Gastrocnemius medialis (tissue), 4 donors: ENCODE measurements at regions of chr5 and their contacts with region 1.

Region 1: GRCh38 chr5:36606428-36607113 is at the start of gene SLC1A3:
- DNase-seq: peak; percentile 64 to 72
- ATAC-seq: peak; percentile 94 to 95
- H3K4me3 ChIP-seq: peak within 1 kb of the TSS; percentile 59 to 83 (median 76)
- H3K27ac ChIP-seq: peak within 1 kb of the TSS; percentile 75 to 94 (median 91)
- H3K4me1 ChIP-seq: peaks cover 21 to 34% of the 10 kb centered on the region in 2 donors
- H3K27me3 ChIP-seq: no peaks in the 10 kb centered on the region
- CTCF ChIP-seq: no peak
- POLR2A ChIP-seq: peak; percentile 77 to 92
- total RNA-seq, gene SLC1A3: 5.3 to 69.4 (median 17.4) TPM

Region 2: DNA sequence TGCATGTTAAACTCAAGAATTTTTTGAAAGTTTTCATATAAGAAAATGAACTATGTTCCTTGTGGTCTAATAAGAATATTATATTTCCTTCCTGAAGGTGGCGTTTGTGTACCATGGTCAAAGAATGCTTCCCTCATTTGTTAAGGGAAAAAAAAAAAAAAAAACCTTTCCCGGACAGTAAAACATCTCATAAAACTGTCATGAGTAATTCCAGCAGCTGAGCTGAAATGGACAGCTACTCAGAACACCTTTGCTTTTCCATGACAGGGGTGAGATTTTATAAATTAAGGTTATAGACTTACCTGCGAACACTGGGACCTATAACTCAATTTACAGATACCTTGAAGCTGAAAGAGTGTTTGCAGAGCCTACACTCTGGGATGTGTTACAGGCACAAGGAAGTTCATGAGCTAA is 191.7 kb before region 1 on chr5:
- in situ Hi-C with region 1: no loop called
- intact Hi-C with region 1: loop called (anchors 10 kb)
- DNase-seq: no peak
- ATAC-seq: peak; percentile 66 to 70
- H3K4me3 ChIP-seq: no peak overlapping the region
- H3K27ac ChIP-seq: no peak overlapping the region
- H3K4me1 ChIP-seq: no peaks in the 10 kb centered on the region
- H3K27me3 ChIP-seq: no peaks in the 10 kb centered on the region
- CTCF ChIP-seq: peak in 4 of 5 experiments; percentile 35 to 59 (median 46)
- POLR2A ChIP-seq: no peak

Region 3: GRCh38 chr5:36882250-36882649 is 275.7 kb after region 1 on chr5:
- in situ Hi-C with region 1: no loop called
- intact Hi-C with region 1: loop called (anchors 5 kb)
- DNase-seq: no peak
- ATAC-seq: no peak
- H3K4me3 ChIP-seq: no peak overlapping the region
- H3K27ac ChIP-seq: peak overlapping the region in 1 of 4 donors; percentile 28
- H3K4me1 ChIP-seq: peaks cover 71 to 74% of the 10 kb centered on the region in 2 donors
- H3K27me3 ChIP-seq: no peaks in the 10 kb centered on the region
- CTCF ChIP-seq: no peak
- POLR2A ChIP-seq: no peak